CD4-positive, alpha-beta memory T cell (primary cell): ENCODE measurements at regions of chr1 and their contacts with region 1.

Region 1: DNA sequence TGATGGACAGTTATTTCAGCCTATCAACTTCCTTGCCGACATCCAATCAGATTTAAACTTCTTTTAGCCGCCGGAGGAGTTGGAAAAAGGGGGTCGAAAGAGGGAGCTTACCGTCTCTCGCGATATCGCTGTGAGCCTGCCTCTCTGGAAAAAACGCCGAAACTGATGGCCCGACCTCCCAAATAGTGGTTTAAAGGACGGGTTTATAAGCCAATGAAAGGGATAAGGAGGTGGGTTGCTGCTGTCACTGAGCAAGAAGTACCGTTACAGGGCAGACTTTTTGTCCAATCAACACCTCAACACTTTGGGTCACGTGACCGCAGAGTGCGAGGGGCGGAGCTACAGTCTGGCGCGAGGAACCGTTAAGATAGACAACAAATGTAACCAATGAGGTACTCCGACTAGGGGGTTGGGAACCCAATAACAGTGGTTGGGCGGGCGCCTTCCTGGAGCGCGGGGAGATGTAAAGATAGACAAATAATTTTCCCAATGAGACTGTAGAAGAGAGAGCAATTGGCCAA is at the start of gene RBM15:
- DNase-seq: peak; percentile 98 to 100 (median 99)
- H3K4me3 ChIP-seq: peak within 1 kb of the TSS; percentile 55 to 89
- H3K4me3 Mint-ChIP-seq: no peak within 1 kb of the TSS
- H3K27ac ChIP-seq: peak within 1 kb of the TSS; percentile 94
- H3K27ac Mint-ChIP-seq: peak within 1 kb of the TSS in 1 of 7 donors; percentile 98
- H3K4me1 ChIP-seq: peaks cover 56% of the 10 kb centered on the region
- H3K4me1 Mint-ChIP-seq: peaks cover 30 to 63% (median 52%) of the 10 kb centered on the region in 4 donors
- H3K27me3 ChIP-seq: no peaks in the 10 kb centered on the region
- H3K27me3 Mint-ChIP-seq: no peaks in the 10 kb centered on the region
- total RNA-seq, gene RBM15: 47.7 to 51.4 TPM

Region 2: GRCh38 chr1:109620841-109621286 is 718.1 kb before region 1 on chr1:
- CTCF ChIA-PET with region 1: no interaction called
- POLR2A ChIA-PET with region 1: no interaction called
- intact Hi-C with region 1: loop called (anchors 2 kb)
- DNase-seq: peak; percentile 96 to 99 (median 97)
- H3K4me3 ChIP-seq: peak overlapping the region; percentile 76 to 93
- H3K4me3 Mint-ChIP-seq: peak overlapping the region; percentile 92 to 99 (median 96)
- H3K27ac ChIP-seq: peak overlapping the region; percentile 96
- H3K27ac Mint-ChIP-seq: peak overlapping the region; percentile 91 to 99 (median 99)
- H3K4me1 ChIP-seq: peaks cover 72% of the 10 kb centered on the region
- H3K4me1 Mint-ChIP-seq: peaks cover 47 to 86% (median 58%) of the 10 kb centered on the region in 4 donors
- H3K27me3 ChIP-seq: no peaks in the 10 kb centered on the region
- H3K27me3 Mint-ChIP-seq: no peaks in the 10 kb centered on the region

Region 3: DNA sequence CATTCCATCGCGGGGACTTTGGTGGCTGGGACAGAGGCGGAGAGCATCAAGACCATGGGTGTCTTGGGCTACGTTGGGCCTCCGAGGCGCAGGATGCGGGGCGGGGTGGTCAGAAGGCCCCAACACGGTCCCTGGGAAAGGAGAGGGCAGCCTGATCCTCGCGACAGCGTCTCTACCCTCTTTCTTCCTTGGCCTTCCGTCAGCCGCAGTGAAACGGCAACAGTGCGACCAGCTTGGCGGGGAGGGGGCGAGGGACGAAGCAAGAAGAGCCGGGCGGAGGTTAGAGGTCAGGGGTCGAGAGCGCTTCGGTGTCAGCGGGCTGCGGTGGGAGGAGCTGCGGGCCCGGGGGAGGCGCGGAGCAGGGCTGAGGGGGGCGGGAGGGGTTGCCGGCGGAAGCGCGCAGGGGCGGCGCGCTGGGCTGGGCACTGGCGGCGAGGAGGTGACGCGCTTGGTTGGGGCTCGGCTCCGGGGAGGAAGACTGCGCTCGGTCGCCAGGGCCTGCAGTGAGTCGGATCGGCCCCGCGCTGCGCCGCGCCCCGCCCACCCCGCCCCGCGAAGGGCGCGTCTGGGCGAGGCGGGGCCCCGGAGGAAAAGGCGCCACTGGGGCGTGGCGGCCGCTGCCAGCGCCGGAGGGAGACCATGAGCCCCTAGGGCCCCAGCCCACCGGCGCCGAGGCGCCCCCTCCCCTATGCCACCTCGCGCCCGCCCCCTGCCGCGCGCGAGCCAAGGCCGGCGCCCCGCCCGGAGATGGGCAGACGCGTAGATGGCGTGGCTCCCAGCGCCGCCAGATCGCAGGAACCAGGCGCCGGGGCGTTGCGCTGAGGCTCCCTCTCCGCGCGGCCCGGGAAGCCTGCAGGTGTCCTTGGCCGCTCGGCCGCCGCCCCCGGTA is 129.0 kb before region 1 on chr1 and contains the start of gene KCNC4:
- CTCF ChIA-PET with region 1: interaction called, 127 read pairs
- POLR2A ChIA-PET with region 1: interaction called, 169 read pairs
- intact Hi-C with region 1: loop called (anchors 1 kb)
- DNase-seq: peak; percentile 91 to 95 (median 94)
- H3K4me3 ChIP-seq: peak within 1 kb of the TSS; percentile 36 to 68
- H3K4me3 Mint-ChIP-seq: peak within 1 kb of the TSS; percentile 87 to 95 (median 89)
- H3K27ac ChIP-seq: peak within 1 kb of the TSS; percentile 81
- H3K27ac Mint-ChIP-seq: peak within 1 kb of the TSS; percentile 89 to 98 (median 97)
- H3K4me1 ChIP-seq: peaks cover 44% of the 10 kb centered on the region
- H3K4me1 Mint-ChIP-seq: peaks cover 32 to 64% (median 45%) of the 10 kb centered on the region in 4 donors
- H3K27me3 ChIP-seq: no peaks in the 10 kb centered on the region
- H3K27me3 Mint-ChIP-seq: no peaks in the 10 kb centered on the region
- total RNA-seq, gene KCNC4: 11.9 to 13.4 TPM

Region 4: GRCh38 chr1:110407260-110408210 is 68.6 kb after region 1 on chr1 and contains the start of gene LAMTOR5:
- CTCF ChIA-PET with region 1: interaction called, 18 read pairs
- POLR2A ChIA-PET with region 1: interaction called, 60 read pairs
- intact Hi-C with region 1: loop called (anchors 1 kb)
- DNase-seq: peak; percentile 89 to 91 (median 90)
- H3K4me3 ChIP-seq: peak within 1 kb of the TSS; percentile 83 to 98
- H3K4me3 Mint-ChIP-seq: peak within 1 kb of the TSS; percentile 96 to 100 (median 99)
- H3K27ac ChIP-seq: peak within 1 kb of the TSS; percentile 87
- H3K27ac Mint-ChIP-seq: peak within 1 kb of the TSS; percentile 95 to 100 (median 99)
- H3K4me1 ChIP-seq: peaks cover 28% of the 10 kb centered on the region
- H3K4me1 Mint-ChIP-seq: peaks cover 17 to 34% (median 24%) of the 10 kb centered on the region in 4 donors
- H3K27me3 ChIP-seq: no peaks in the 10 kb centered on the region
- H3K27me3 Mint-ChIP-seq: no peaks in the 10 kb centered on the region
- total RNA-seq, gene LAMTOR5: 64.5 to 69.6 TPM

Region 5: DNA sequence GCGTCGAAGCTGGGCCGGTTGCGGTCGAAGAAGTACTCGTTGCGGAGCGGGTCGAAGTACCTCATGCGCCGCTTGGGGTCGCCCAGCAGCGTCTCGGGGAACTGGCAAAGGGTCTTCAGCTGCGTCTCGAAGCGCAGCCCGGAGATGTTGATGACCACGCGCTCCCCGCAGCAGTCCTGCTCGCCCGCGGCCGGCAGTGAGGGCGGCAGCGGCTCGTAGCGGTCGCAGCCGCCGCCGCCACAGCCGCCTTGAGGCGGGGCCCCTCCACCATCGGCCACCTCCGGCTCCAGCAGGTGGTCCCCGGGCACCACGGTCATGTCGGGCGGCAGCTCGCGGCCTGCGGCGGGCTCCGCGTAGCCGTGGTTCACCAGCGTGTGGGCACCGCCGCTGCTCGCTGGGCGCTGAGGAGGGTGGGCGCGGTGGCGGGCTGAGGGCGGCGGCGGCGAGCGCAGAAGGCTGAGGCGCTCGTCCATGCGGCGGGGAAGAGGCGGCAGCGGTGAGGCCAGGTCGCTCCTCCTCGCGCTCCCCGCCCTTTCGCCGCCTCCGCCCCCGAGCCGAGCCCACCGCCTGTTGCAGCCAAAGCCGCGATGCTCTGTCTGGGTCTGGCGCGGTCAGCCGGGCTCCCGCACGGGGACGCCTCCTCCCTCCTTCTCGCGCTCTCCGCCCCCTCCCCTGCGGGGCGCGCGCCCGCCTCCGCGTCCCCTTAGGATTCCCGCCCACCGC is 335.6 kb after region 1 on chr1 and contains the start of gene KCNA3:
- CTCF ChIA-PET with region 1: no interaction called
- POLR2A ChIA-PET with region 1: interaction called, 12 read pairs
- intact Hi-C with region 1: loop called (anchors 5 kb)
- DNase-seq: peak; percentile 67 to 79 (median 69)
- H3K4me3 ChIP-seq: peak within 1 kb of the TSS; percentile 73 to 78
- H3K4me3 Mint-ChIP-seq: peak within 1 kb of the TSS; percentile 84 to 100 (median 100)
- H3K27ac ChIP-seq: peak within 1 kb of the TSS; percentile 91
- H3K27ac Mint-ChIP-seq: peak within 1 kb of the TSS; percentile 76 to 100 (median 99)
- H3K4me1 ChIP-seq: peaks cover 38% of the 10 kb centered on the region
- H3K4me1 Mint-ChIP-seq: peaks cover 28 to 79% (median 38%) of the 10 kb centered on the region in 4 donors
- H3K27me3 ChIP-seq: no peaks in the 10 kb centered on the region
- H3K27me3 Mint-ChIP-seq: no peaks in the 10 kb centered on the region
- total RNA-seq, gene KCNA3: 124 TPM

Region 6: DNA sequence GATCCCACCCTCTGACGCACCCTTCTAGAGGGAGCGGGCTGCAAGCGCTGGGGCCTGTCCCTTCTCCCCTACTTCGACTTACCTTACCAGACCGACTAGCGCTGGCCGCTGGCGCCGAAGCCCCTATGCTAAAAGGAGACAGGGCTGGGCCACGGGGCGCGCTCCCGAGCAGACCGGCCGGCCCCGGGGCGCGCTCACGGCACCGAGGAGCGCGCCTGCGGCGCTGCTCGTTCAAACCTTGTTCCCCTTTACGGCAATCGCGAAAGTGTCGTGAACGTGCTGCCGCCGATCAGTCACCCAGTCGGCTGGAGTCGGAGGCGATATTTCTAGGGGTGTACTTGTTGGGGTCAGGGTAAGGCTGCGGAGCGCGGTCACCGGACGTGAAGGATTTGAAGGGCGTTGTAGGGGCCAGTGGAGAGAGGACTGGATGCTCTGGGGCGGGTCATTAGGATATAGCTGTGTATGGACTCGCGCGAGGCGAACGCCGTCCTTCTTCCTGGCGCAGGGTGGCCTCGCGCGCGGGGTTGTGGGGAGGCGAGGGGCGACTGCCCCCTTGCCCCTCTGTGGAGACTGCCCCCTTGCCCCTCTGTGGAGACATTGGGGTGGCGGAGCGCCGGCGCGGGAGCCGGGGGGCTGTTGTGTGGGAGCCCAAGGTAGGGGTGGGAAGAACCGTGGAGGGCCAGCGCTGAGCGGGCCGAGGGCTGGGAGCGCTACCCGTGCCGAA is 801.2 kb after region 1 on chr1 and contains the starts of genes CEPT1 and DRAM2:
- CTCF ChIA-PET with region 1: no interaction called
- POLR2A ChIA-PET with region 1: interaction called, 3 read pairs
- intact Hi-C with region 1: loop called (anchors 2 kb)
- DNase-seq: peak; percentile 89 to 95 (median 91)
- H3K4me3 ChIP-seq: peak within 1 kb of the TSS; percentile 57 to 97
- H3K4me3 Mint-ChIP-seq: peak within 1 kb of the TSS; percentile 98 to 100 (median 100)
- H3K27ac ChIP-seq: peak within 1 kb of the TSS; percentile 79
- H3K27ac Mint-ChIP-seq: peak within 1 kb of the TSS; percentile 84 to 100 (median 99)
- H3K4me1 ChIP-seq: peaks cover 54% of the 10 kb centered on the region
- H3K4me1 Mint-ChIP-seq: peaks cover 32 to 54% (median 41%) of the 10 kb centered on the region in 4 donors
- H3K27me3 ChIP-seq: no peaks in the 10 kb centered on the region
- H3K27me3 Mint-ChIP-seq: no peaks in the 10 kb centered on the region
- total RNA-seq, gene CEPT1: 49.1 to 49.6 TPM
- total RNA-seq, gene DRAM2: 37.5 to 38.8 TPM